ENCODE measurements at regions of chr19 and their contacts with region 1.

Region 1: DNA sequence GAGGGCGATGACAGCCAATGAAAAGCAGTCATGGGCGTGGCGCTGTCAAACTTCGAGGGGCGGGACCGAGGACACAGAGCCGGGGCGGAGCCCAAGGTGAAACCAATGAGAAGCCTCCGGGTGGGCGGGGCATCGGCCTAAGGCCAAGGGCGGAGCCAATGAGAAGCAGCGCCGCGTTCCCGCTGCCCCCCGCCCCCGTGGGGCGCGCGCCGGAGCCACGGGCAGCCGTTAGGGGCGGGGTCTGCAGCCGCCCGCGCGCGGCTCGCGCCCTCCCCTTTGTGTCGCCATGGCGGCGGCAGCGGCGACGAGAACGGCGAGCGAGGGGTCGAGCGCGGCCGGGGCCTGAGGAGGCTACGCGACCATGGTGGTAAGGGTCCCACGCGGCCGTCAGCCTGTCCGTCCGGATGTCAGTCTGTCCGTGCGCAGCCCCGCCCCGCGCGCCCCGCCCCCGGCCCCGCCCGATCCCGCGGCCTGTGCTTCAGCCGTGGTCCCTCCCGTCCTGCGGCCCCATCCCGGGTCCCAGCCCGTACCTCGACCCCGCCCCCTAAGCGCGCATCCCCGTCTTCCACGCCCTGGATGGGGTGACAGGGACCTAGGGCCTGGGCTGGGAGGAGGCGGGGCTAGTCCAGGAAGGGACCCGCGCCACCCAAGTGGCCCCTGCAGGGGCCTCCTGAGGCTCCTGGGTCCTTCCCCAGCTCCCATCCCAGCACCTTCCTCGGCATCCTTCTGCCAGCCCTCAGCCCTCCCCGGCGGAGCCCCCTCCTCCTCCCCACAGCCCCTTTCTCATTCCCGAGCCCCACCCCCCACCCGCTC is at the start of gene ARHGAP33:
- DNase-seq: peak; percentile 98 to 100 (median 100)

Region 2: GRCh38 chr19:35869327-35870123 is 94.0 kb after region 1 on chr19:
- intact Hi-C with region 1: loop called (anchors 5 kb)
- DNase-seq: peak; percentile 84 to 97 (median 92)

Measured in head of caudate nucleus (tissue), 42 donors.